AG04449 (cell line): ENCODE measurements at regions of chr7 and their contacts with region 1.

Region 1: GRCh38 chr7:128006550-128007302 is 24.5 kb downstream of the LRRC4 start:
- DNase-seq: no peak
- H3K4me3 ChIP-seq: no peak overlapping the region
- CTCF ChIP-seq: no peak

Region 2: DNA sequence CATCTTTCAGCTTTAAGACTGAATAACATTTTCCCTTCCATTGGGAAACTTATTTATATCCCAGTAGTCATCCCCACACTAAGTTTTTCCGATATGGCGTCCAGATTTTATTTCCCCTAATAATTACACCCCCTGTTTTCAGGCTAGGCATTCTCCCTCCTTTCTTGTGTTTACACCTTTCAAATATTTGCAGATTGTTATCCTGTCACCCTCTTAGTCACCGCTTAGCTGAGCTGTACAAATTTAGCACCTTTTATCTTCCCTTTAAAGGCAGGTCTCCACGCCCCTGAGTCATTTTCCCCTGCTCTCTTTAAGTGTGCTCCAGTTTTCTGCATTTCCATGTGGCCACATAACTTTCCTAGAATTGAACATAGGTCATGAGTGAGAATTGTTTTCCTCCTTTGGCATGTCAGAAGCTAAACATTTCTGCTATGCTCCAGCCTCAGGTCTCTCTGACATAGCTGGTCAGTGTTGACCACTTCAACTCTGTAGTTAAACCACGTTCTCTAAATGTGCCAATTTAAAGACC is 22.9 kb before region 1 on chr7:
- CTCF ChIA-PET with region 1: no interaction called
- POLR2A ChIA-PET with region 1: no interaction called
- DNase-seq: no peak
- H3K4me3 ChIP-seq: no peak overlapping the region
- CTCF ChIP-seq: no peak

Region 3: GRCh38 chr7:128020159-128020558 is 13.4 kb after region 1 on chr7:
- CTCF ChIA-PET with region 1: interaction called, 14 read pairs
- POLR2A ChIA-PET with region 1: no interaction called
- DNase-seq: no peak
- H3K4me3 ChIP-seq: no peak overlapping the region
- CTCF ChIP-seq: no peak